GM18951 (cell line): ENCODE measurements at regions of chr5 and their contacts with region 1.

Region 1: GRCh38 chr5:56838409-56839039 is 23.2 kb downstream of the MAP3K1 start:
- POLR2A ChIP-seq: no peak

Region 2: DNA sequence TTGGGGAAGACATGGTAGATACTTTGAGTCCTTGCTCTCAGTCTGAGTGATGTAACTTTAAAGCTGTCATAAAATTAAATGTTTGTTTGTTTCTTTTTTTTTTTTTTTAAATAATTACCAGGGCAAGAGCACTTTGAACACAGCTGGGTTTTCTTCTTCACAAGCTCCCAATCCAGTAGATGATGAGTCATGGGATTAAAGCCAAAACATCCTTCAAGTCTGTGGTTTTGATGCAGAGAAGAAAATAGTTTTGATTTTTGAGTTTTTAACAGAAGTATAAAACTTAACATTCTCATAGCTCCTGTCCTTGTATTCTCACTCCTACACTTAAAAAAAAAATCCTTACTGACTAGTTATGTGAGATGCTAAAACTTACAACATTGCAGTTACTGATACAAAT is 1022.2 kb before region 1 on chr5:
- in situ Hi-C with region 1: no loop called
- POLR2A ChIP-seq: no peak

Region 3: GRCh38 chr5:55936100-55936693 is 902.3 kb before region 1 on chr5:
- in situ Hi-C with region 1: loop called (anchors 25 kb)
- POLR2A ChIP-seq: peak; percentile 23

Region 4: DNA sequence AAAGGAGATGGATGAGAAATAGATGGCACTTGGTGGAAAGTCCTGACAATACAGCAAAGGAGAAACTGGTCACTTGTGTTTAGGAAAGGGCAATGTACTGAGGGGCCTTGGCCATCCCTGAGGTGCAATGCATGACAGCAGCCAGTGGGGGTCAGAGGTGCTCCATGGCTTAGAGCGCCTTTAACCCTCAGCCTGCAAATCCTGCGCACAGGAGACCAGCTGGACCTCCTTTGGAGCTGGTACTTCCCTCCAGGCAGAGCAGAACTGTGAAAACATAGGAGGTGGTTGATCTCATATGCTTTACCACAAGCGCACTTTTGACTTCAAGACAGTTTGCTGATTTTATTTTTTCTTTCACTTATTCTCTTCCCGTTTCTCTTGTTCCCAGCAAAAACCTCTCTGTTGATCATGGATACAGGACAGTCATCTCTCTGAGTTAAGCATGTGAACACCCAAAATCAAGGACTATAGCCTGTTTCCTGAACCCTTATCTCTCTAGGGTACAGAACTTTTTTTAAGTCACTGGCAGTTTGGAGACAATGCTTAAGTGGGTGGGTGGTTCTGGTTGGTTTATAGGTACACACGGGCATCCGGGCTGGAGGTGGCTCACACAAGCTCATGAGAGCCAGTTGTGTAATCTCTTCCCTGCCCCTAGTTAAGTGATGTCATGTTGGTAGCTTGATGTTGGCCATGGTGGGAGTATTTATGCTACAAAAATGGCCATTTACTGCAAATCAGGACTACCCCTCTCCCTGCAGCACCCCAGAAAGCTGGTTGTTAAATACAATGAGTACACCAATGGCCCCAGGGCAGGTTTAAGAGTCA is 567.7 kb before region 1 on chr5:
- in situ Hi-C with region 1: loop called (anchors 5 kb)
- POLR2A ChIP-seq: no peak

Region 5: GRCh38 chr5:56676091-56676768 is 162.3 kb before region 1 on chr5:
- in situ Hi-C with region 1: no loop called
- POLR2A ChIP-seq: no peak